IMR-90 (cell line): ENCODE measurements at regions of chr15 and their contacts with region 1.

Region 1: GRCh38 chr15:97623091-97623661 is 337.3 kb upstream of the ARRDC4 start:
- DNase-seq: no peak
- ATAC-seq: no peak
- H3K4me3 ChIP-seq: no peak overlapping the region
- H3K27ac ChIP-seq: no peak overlapping the region
- H3K4me1 ChIP-seq: no peaks in the 10 kb centered on the region
- H3K27me3 ChIP-seq: no peaks in the 10 kb centered on the region
- CTCF ChIP-seq: no peak
- POLR2A ChIP-seq: no peak
- RAD21 ChIP-seq: no peak

Region 2: DNA sequence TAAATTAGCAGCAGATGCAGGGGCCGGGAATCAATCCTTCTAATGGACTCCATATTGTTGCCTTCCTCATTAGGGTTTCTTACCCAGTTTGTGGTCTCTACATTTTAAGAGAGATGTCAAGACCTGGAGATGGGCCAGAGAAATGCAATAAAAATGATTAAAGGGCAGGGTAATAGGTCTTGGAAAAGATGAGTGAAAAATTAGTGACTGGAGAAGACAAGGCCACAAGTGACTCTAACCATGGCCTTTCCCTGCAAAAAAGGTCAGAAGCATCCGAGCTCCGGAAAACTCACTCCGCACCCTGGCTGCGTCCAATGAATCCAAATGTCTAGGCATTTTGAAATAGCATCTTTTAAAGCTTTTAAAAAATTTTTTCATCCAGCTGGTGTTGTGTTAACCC is 490.2 kb after region 1 on chr15:
- CTCF ChIA-PET with region 1: no interaction called
- POLR2A ChIA-PET with region 1: no interaction called
- dilution Hi-C with region 1: no loop called
- in situ Hi-C with region 1: no loop called
- intact Hi-C with region 1: loop called (anchors 5 kb)
- DNase-seq: no peak
- ATAC-seq: no peak
- H3K4me3 ChIP-seq: no peak overlapping the region
- H3K27ac ChIP-seq: no peak overlapping the region
- H3K4me1 ChIP-seq: no peaks in the 10 kb centered on the region
- H3K27me3 ChIP-seq: no peaks in the 10 kb centered on the region
- CTCF ChIP-seq: no peak
- POLR2A ChIP-seq: no peak
- RAD21 ChIP-seq: no peak